ENCODE measurements at regions of chr18 and their contacts with region 1.

Region 1: GRCh38 chr18:52339891-52340371 is at the start of gene DCC:
- DNase-seq: peak; percentile 98
- H3K4me3 ChIP-seq: peak within 1 kb of the TSS; percentile 96
- H3K27ac ChIP-seq: peak within 1 kb of the TSS; percentile 94
- H3K4me1 ChIP-seq: peaks cover 17% of the 10 kb centered on the region
- H3K27me3 ChIP-seq: no peaks in the 10 kb centered on the region
- CTCF ChIP-seq: peak; percentile 72
- total RNA-seq, gene DCC: 93.0 and 99.5 TPM in 2 replicates

Region 2: DNA sequence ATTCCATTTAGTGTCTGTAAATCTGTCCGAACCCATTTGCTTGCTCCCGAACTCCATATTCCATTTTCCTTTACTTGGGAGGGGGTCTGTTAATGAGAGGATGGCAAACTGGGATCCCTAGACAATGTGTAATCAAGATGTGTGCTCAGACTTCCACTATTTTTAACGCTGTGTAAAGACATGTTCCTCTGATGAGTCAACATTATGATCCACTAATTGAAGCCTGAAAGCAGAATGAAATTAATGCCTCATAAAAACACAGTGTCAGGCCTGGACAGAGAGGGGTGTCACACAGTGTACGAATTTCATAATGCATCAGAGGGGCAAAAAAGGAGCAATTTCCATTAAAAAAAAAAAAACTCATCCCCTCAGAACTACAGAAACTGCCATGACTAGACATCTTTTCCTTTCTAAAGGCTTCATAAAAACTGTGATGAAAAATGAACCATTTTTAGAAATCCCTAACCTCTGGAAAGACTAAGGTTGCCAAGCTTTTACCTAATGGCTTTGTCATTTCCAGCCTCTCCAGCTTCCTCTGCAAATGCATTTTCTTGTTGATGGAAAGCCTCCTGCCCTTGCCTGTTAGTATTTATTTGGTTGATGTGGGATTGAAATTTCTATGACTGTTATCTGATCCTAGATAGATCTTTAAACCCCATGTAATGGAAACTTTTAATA is 209.2 kb before region 1 on chr18:
- CTCF ChIA-PET with region 1: no interaction called
- POLR2A ChIA-PET with region 1: no interaction called
- intact Hi-C with region 1: loop called (anchors 10 kb)
- DNase-seq: peak; percentile 23
- H3K4me3 ChIP-seq: no peak overlapping the region
- H3K27ac ChIP-seq: no peak overlapping the region
- H3K4me1 ChIP-seq: no peaks in the 10 kb centered on the region
- H3K27me3 ChIP-seq: no peaks in the 10 kb centered on the region
- CTCF ChIP-seq: no peak

Region 3: GRCh38 chr18:52422985-52423601 is 83.2 kb after region 1 on chr18:
- CTCF ChIA-PET with region 1: interaction called, 3 read pairs
- POLR2A ChIA-PET with region 1: interaction called, 15 read pairs
- intact Hi-C with region 1: loop called (anchors 2 kb)
- DNase-seq: peak; percentile 83
- H3K4me3 ChIP-seq: no peak overlapping the region
- H3K27ac ChIP-seq: peak overlapping the region; percentile 99
- H3K4me1 ChIP-seq: peaks cover 90% of the 10 kb centered on the region
- H3K27me3 ChIP-seq: no peaks in the 10 kb centered on the region
- CTCF ChIP-seq: peak; percentile 58

Region 4: GRCh38 chr18:52570975-52571374 is 231.0 kb after region 1 on chr18:
- CTCF ChIA-PET with region 1: interaction called, 7 read pairs
- POLR2A ChIA-PET with region 1: no interaction called
- intact Hi-C with region 1: loop called (anchors 10 kb)
- DNase-seq: no peak
- H3K4me3 ChIP-seq: no peak overlapping the region
- H3K27ac ChIP-seq: peak overlapping the region; percentile 39
- H3K4me1 ChIP-seq: peaks cover 60% of the 10 kb centered on the region
- H3K27me3 ChIP-seq: no peaks in the 10 kb centered on the region
- CTCF ChIP-seq: no peak

Region 5: DNA sequence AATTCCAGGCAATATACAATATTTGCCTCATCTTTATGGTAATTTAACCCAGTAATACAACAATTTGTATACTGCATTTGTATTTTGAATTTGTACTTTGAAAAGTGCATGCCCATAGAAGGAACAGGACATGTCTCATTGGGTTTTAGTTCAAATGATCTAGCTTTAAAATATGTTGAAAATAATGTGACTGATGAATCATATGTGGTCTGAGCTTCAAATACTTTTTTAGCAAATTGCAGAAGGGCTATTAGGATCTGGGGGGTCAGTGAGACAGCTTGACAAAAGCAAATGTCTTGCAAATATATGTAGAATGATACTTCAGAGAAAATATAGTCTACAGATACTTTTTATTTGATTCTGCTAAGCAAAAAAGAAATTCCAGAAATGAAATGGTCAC is 249.0 kb after region 1 on chr18:
- CTCF ChIA-PET with region 1: no interaction called
- POLR2A ChIA-PET with region 1: no interaction called
- intact Hi-C with region 1: no loop called
- DNase-seq: no peak
- H3K4me3 ChIP-seq: no peak overlapping the region
- H3K27ac ChIP-seq: no peak overlapping the region
- H3K4me1 ChIP-seq: peaks cover 24% of the 10 kb centered on the region
- H3K27me3 ChIP-seq: no peaks in the 10 kb centered on the region
- CTCF ChIP-seq: no peak

Region 6: DNA sequence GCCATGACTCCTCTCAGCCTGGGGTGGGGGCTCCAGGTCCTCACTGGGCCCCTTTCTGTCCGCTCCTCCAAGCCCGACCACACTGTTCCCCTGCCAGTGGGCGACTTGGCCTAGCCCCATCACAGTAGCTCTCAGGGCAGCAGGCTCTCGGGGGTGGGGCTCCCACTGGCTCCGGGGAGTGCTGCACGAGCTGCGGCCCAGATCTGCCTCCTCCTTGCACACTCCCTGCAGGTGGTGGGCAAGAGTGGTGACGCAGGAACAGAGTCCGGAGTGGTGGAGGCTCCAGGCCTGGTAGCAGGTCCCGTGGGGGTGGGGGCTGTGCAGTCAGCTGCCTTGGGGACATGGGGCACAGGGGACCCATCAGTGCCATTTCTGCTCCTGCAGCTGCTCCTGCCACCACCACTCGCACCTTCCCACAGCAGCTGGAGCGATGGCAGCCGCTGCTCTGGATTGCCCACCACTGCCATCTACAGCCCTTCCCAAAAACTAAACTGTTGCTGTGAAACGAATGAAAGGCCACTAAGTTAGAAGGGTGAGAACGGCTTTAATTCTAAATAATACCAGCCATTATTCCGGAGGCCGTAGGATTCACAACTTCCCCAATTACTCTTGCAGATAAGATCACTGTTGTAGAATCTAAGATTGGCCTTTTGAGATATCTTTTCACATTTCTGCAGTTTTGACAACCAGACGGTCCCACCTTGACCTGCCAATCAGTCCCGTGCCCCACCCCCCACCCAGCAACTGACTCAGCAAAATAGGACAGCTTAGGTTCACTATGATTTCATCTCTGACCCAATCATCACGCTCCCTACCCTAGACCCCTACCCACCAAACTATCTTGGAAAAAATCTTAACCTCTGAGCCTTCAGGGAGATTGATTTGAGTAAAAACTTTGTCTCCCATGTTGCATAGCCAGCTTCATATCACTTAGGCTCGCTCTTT is 530.3 kb after region 1 on chr18:
- CTCF ChIA-PET with region 1: no interaction called
- POLR2A ChIA-PET with region 1: no interaction called
- intact Hi-C with region 1: loop called (anchors 5 kb)
- DNase-seq: peak; percentile 82
- H3K4me3 ChIP-seq: no peak overlapping the region
- H3K27ac ChIP-seq: no peak overlapping the region
- H3K4me1 ChIP-seq: peaks cover 23% of the 10 kb centered on the region
- H3K27me3 ChIP-seq: no peaks in the 10 kb centered on the region
- CTCF ChIP-seq: peak; percentile 74

Region 7: GRCh38 chr18:52903857-52904256 is 563.9 kb after region 1 on chr18:
- CTCF ChIA-PET with region 1: no interaction called
- POLR2A ChIA-PET with region 1: no interaction called
- intact Hi-C with region 1: loop called (anchors 5 kb)
- DNase-seq: peak; percentile 85
- H3K4me3 ChIP-seq: no peak overlapping the region
- H3K27ac ChIP-seq: no peak overlapping the region
- H3K4me1 ChIP-seq: peaks cover 25% of the 10 kb centered on the region
- H3K27me3 ChIP-seq: no peaks in the 10 kb centered on the region
- CTCF ChIP-seq: peak; percentile 93

Measured in A673 (cell line).